B cell (primary cell): ENCODE measurements at regions of chr16 and their contacts with region 1.

Region 1: GRCh38 chr16:87778830-87779579 is 13.2 kb upstream of the KLHDC4 start:
- DNase-seq: peak; percentile 96
- ATAC-seq: peak; percentile 89
- H3K4me3 ChIP-seq: no peak overlapping the region
- H3K4me3 Mint-ChIP-seq: peak overlapping the region; percentile 75
- H3K27ac ChIP-seq: no peak overlapping the region
- H3K27ac Mint-ChIP-seq: peak overlapping the region; percentile 83
- H3K4me1 ChIP-seq: peaks cover 22 to 40% of the 10 kb centered on the region in 2 donors
- H3K4me1 Mint-ChIP-seq: peaks cover 33% of the 10 kb centered on the region
- H3K27me3 ChIP-seq: no peaks in the 10 kb centered on the region
- H3K27me3 Mint-ChIP-seq: peaks cover 9% of the 10 kb centered on the region
- CTCF ChIP-seq: peak; percentile 93

Region 2: GRCh38 chr16:87744750-87745514 is 34.1 kb before region 1 on chr16:
- CTCF ChIA-PET with region 1: no interaction called
- POLR2A ChIA-PET with region 1: no interaction called
- intact Hi-C with region 1: no loop called
- DNase-seq: no peak
- ATAC-seq: no peak
- H3K4me3 ChIP-seq: no peak overlapping the region
- H3K4me3 Mint-ChIP-seq: no peak overlapping the region
- H3K27ac ChIP-seq: no peak overlapping the region
- H3K27ac Mint-ChIP-seq: no peak overlapping the region
- H3K4me1 ChIP-seq: no peaks in the 10 kb centered on the region
- H3K4me1 Mint-ChIP-seq: no peaks in the 10 kb centered on the region
- H3K27me3 ChIP-seq: no peaks in the 10 kb centered on the region
- H3K27me3 Mint-ChIP-seq: no peaks in the 10 kb centered on the region
- CTCF ChIP-seq: no peak

Region 3: DNA sequence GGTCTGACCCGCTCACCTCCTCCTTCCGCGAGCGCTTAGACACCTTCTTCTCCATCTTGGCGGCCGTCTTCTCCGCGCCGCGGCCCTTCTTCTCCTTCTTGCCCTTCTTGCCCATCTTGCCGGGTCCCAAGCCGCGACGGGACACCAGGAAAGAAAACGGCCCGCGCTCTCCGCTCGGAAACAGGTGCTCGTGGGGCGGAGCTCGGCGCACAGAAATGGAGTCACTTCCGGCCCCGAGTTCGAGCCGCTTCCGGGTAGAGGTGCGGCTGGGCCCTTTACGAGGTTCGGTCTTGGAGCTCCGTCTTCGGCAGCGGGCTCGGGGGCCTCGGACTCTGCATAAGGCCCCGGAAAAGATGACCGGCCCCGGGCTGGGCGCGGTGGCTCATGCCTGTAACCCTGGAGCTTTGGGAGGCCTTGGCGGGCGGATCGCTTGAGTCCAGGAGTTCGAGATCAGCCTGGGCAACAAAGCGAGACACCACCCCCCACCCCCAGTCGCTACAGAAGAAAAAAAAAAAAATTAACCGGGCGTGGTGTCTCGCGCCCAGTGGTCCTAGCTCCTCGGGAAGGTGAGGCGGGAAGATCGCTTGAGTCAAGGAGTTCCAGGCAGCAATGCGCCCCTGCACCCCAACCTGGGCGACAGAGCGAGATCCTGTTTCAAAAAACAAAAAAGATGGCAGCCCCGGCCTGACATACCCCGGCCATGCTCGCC is 13.1 kb before region 1 on chr16 and contains the start of gene KLHDC4:
- CTCF ChIA-PET with region 1: interaction called, 34 read pairs
- POLR2A ChIA-PET with region 1: interaction called, 5 read pairs
- intact Hi-C with region 1: no loop called
- DNase-seq: peak; percentile 93
- ATAC-seq: peak; percentile 85
- H3K4me3 ChIP-seq: peak within 1 kb of the TSS; percentile 59 to 95 (median 78)
- H3K4me3 Mint-ChIP-seq: peak within 1 kb of the TSS; percentile 100
- H3K27ac ChIP-seq: peak within 1 kb of the TSS; percentile 93
- H3K27ac Mint-ChIP-seq: peak within 1 kb of the TSS; percentile 98
- H3K4me1 ChIP-seq: peaks cover 15 to 26% of the 10 kb centered on the region in 2 donors
- H3K4me1 Mint-ChIP-seq: peaks cover 36% of the 10 kb centered on the region
- H3K27me3 ChIP-seq: no peaks in the 10 kb centered on the region
- H3K27me3 Mint-ChIP-seq: no peaks in the 10 kb centered on the region
- CTCF ChIP-seq: no peak
- total RNA-seq, gene KLHDC4: 90.8 and 115 TPM in 2 replicates

Region 4: GRCh38 chr16:87806603-87807546 is 27.9 kb after region 1 on chr16:
- CTCF ChIA-PET with region 1: interaction called, 154 read pairs
- POLR2A ChIA-PET with region 1: interaction called, 12 read pairs
- intact Hi-C with region 1: loop called (anchors 1 kb)
- DNase-seq: peak; percentile 78
- ATAC-seq: peak; percentile 29
- H3K4me3 ChIP-seq: peak overlapping the region in 1 of 5 experiments; percentile 22
- H3K4me3 Mint-ChIP-seq: peak overlapping the region; percentile 85
- H3K27ac ChIP-seq: peak overlapping the region; percentile 62 to 78
- H3K27ac Mint-ChIP-seq: peak overlapping the region; percentile 85
- H3K4me1 ChIP-seq: peaks cover 52 to 78% of the 10 kb centered on the region in 2 donors
- H3K4me1 Mint-ChIP-seq: peaks cover 63% of the 10 kb centered on the region
- H3K27me3 ChIP-seq: peaks cover 0 to under 1% (median 0%) of the 10 kb centered on the region in 4 experiments
- H3K27me3 Mint-ChIP-seq: peaks cover 3% of the 10 kb centered on the region
- CTCF ChIP-seq: no peak

Region 5: DNA sequence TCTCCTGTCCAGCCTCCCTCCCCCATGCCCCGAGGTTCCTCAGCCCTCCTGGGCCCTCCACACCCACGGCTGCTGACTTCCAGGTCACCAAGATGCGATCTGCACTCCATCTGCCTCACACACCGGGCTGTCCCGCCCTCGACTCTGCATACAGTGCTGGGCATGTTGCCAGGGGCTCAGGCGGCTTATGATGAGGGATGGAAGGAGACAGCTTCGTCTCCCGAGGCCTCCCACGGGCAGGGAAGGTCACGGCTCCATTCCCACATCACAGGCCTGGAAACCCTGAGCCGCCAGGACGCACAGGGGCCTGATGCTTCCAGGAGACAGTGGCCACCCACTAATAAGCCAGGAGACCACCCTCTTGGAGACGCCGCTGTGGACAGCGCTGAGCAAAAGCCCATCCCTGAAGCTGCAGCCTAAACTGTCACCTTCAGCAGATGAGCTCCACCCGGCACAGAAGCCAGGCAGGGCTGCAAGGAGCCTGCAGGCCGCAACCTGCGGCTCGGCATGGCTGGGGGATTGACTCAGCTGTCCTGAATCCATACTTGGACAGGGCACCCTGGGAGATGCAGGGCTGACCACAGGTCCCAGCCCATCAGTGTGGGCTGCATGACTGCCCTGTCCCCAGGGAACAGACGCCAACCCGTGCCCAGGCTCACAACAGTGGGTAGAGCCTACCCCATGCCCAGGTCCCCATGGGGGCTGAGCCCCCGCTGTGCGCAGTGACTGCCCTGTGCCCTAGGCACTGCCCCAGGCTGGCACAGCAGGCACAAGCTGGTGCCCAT is 55.8 kb after region 1 on chr16:
- CTCF ChIA-PET with region 1: interaction called, 11 read pairs
- POLR2A ChIA-PET with region 1: interaction called, 7 read pairs
- intact Hi-C with region 1: no loop called
- DNase-seq: no peak
- ATAC-seq: no peak
- H3K4me3 ChIP-seq: no peak overlapping the region
- H3K4me3 Mint-ChIP-seq: no peak overlapping the region
- H3K27ac ChIP-seq: no peak overlapping the region
- H3K27ac Mint-ChIP-seq: no peak overlapping the region
- H3K4me1 ChIP-seq: peaks cover 3 to 21% of the 10 kb centered on the region in 2 donors
- H3K4me1 Mint-ChIP-seq: peaks cover 14% of the 10 kb centered on the region
- H3K27me3 ChIP-seq: no peaks in the 10 kb centered on the region
- H3K27me3 Mint-ChIP-seq: no peaks in the 10 kb centered on the region
- CTCF ChIP-seq: no peak

Region 6: GRCh38 chr16:87877938-87878507 is 99.0 kb after region 1 on chr16:
- CTCF ChIA-PET with region 1: interaction called, 498 read pairs
- POLR2A ChIA-PET with region 1: interaction called, 3 read pairs
- intact Hi-C with region 1: no loop called
- DNase-seq: no peak
- ATAC-seq: no peak
- H3K4me3 ChIP-seq: no peak overlapping the region
- H3K4me3 Mint-ChIP-seq: no peak overlapping the region
- H3K27ac ChIP-seq: no peak overlapping the region
- H3K27ac Mint-ChIP-seq: no peak overlapping the region
- H3K4me1 ChIP-seq: no peaks in the 10 kb centered on the region
- H3K4me1 Mint-ChIP-seq: peaks cover 7% of the 10 kb centered on the region
- H3K27me3 ChIP-seq: peaks cover 0 to 7% (median 1%) of the 10 kb centered on the region in 4 experiments
- H3K27me3 Mint-ChIP-seq: peaks cover 23% of the 10 kb centered on the region
- CTCF ChIP-seq: no peak

Region 7: GRCh38 chr16:87924422-87925298 is 145.7 kb after region 1 on chr16:
- CTCF ChIA-PET with region 1: interaction called, 14 read pairs
- POLR2A ChIA-PET with region 1: interaction called, 4 read pairs
- intact Hi-C with region 1: no loop called
- DNase-seq: peak; percentile 87
- ATAC-seq: peak; percentile 82
- H3K4me3 ChIP-seq: peak overlapping the region in 1 of 5 experiments; percentile 3
- H3K4me3 Mint-ChIP-seq: peak overlapping the region; percentile 82
- H3K27ac ChIP-seq: peak overlapping the region in 1 of 2 donors; percentile 11
- H3K27ac Mint-ChIP-seq: peak overlapping the region; percentile 76
- H3K4me1 ChIP-seq: peaks cover 32 to 35% of the 10 kb centered on the region in 2 donors
- H3K4me1 Mint-ChIP-seq: peaks cover 34% of the 10 kb centered on the region
- H3K27me3 ChIP-seq: no peaks in the 10 kb centered on the region
- H3K27me3 Mint-ChIP-seq: no peaks in the 10 kb centered on the region
- CTCF ChIP-seq: peak; percentile 10

Region 8: DNA sequence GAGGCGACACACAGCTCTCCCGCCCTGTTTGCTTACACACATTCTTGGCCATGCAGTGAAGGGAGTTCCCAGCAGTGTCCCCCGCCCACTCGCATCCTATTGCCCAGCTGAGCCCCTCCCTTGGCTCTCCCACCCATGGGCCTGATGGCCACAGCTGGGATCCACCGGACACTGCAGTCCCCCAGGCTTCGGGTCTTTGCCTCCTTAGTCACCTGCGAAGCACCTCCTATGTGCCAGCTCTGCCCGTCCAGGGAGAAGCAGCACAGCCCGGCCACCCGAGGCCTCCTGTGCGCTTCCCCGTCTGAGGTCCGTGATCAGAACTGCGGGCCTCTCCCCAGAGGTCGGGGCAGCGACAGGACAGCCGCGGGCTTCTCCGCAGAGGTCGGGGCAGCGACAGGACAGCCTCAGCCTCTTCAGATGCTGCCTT is 309.2 kb after region 1 on chr16:
- CTCF ChIA-PET with region 1: no interaction called
- POLR2A ChIA-PET with region 1: no interaction called
- intact Hi-C with region 1: no loop called
- DNase-seq: no peak
- ATAC-seq: no peak
- H3K4me3 ChIP-seq: no peak overlapping the region
- H3K4me3 Mint-ChIP-seq: no peak overlapping the region
- H3K27ac ChIP-seq: no peak overlapping the region
- H3K27ac Mint-ChIP-seq: no peak overlapping the region
- H3K4me1 ChIP-seq: no peaks in the 10 kb centered on the region
- H3K4me1 Mint-ChIP-seq: peaks cover 8% of the 10 kb centered on the region
- H3K27me3 ChIP-seq: no peaks in the 10 kb centered on the region
- H3K27me3 Mint-ChIP-seq: no peaks in the 10 kb centered on the region
- CTCF ChIP-seq: no peak